Activated B cell treated with CpG ODN at 0.5 μM for 24 hours (primary cell): ENCODE measurements at regions of chr22 and their contacts with region 1.

Region 1: GRCh38 chr22:41285820-41286638 is at the start of gene RANGAP1:
- DNase-seq: peak; percentile 93
- ATAC-seq: peak; percentile 97
- H3K4me3 Mint-ChIP-seq: peak within 1 kb of the TSS; percentile 94
- H3K27ac Mint-ChIP-seq: peak within 1 kb of the TSS; percentile 98
- H3K4me1 Mint-ChIP-seq: peaks cover 28% of the 10 kb centered on the region
- H3K27me3 Mint-ChIP-seq: no peaks in the 10 kb centered on the region
- CTCF ChIP-seq: no peak
- total RNA-seq, gene RANGAP1: 48.9 and 56.4 TPM in 2 replicates

Region 2: DNA sequence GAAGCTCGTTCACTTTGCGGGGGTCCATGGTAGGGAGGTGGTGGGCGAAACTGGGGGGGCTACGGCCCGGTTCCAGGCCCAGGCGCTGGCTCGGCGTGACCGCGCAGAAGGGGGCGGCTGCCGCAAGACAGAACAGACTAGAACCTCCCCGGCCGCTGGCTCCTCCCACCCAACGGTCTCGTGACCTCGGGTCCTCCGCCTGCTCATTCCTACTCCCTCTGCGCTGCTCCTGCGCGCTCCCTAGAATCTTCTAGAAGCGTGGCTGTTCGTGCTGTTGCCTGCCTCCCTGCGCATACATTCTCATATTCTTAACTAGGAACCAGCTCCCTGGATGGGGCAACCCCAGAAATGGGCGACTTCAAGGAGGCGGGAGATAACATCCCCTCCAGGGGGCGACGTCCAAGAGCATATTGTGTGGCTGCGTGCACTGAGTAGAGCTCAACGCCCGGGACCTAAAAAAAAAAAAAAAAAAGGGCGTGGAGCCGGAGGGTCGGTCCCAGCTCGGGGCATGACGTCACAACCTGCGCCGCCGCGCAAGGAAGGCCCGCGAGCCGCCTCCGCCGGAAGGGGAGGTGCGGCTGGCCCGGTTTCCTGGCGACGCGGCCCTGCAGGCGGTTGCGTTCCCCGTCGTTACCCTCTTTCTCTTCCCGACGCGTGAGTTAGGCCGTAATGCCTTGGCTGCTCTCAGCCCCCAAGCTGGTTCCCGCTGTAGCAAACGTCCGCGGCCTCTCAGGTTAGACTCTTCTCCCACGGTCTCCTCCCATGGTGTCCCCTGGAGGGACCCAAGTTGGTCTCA is 429.3 kb before region 1 on chr22 and contains the starts of genes ST13 and XPNPEP3:
- CTCF ChIA-PET with region 1: no interaction called
- POLR2A ChIA-PET with region 1: no interaction called
- intact Hi-C with region 1: loop called (anchors 1 kb)
- DNase-seq: peak; percentile 96
- ATAC-seq: peak; percentile 90
- H3K4me3 Mint-ChIP-seq: peak within 1 kb of the TSS; percentile 98
- H3K27ac Mint-ChIP-seq: peak within 1 kb of the TSS; percentile 100
- H3K4me1 Mint-ChIP-seq: peaks cover 47% of the 10 kb centered on the region
- H3K27me3 Mint-ChIP-seq: no peaks in the 10 kb centered on the region
- CTCF ChIP-seq: no peak
- total RNA-seq, gene ST13: 183 and 221 TPM in 2 replicates
- total RNA-seq, gene XPNPEP3: 20.3 and 20.8 TPM in 2 replicates

Region 3: DNA sequence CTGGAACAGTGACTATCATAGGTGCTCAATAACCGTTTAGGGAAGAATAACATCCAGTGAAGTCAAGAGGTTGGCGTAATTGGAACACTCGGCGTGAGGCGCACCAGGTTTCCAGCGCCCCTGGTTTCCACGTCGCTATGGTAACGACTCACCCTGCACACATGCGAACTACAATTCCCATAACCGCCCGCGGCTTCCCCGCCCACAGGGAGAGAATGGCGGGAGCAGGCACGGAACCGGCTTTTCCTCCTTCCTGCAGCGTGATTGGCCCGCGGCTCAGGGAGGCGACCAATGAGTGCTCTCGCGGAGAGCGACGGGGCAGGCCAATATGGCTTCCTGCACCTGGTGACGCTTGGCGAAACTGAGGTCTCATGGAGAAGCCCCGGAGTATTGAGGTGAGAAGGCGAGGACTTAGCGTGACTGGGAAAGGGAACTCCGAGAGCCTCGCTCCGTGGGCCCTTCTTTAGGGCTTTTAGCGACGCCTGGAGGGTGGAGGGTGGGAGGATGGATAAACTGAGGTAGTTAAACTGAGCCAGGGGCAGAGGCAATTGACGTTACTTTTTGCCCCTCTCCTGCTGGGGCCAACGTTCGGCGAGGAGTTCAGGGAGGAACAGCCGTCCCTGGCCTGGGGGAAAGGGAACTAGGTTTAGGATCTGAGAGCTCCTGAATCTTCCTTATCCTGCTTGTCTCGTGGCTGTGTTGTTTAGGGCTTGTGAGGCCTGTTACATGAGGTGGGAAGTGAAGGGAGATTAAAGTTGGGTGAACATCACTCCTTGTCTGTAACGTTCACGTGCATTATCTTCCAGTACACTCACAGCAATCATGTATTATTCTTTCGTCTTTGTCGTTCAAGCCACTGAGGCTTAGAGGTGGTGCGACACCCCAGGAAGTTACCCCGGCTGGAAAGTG is 80.8 kb before region 1 on chr22 and contains the start of gene L3MBTL2:
- CTCF ChIA-PET with region 1: no interaction called
- POLR2A ChIA-PET with region 1: interaction called, 3 read pairs
- intact Hi-C with region 1: loop called (anchors 1 kb)
- DNase-seq: peak; percentile 96
- ATAC-seq: peak; percentile 100
- H3K4me3 Mint-ChIP-seq: peak within 1 kb of the TSS; percentile 90
- H3K27ac Mint-ChIP-seq: peak within 1 kb of the TSS; percentile 86
- H3K4me1 Mint-ChIP-seq: peaks cover 30% of the 10 kb centered on the region
- H3K27me3 Mint-ChIP-seq: peaks cover 9% of the 10 kb centered on the region
- CTCF ChIP-seq: no peak
- total RNA-seq, gene L3MBTL2: 39.9 and 42.3 TPM in 2 replicates

Region 4: DNA sequence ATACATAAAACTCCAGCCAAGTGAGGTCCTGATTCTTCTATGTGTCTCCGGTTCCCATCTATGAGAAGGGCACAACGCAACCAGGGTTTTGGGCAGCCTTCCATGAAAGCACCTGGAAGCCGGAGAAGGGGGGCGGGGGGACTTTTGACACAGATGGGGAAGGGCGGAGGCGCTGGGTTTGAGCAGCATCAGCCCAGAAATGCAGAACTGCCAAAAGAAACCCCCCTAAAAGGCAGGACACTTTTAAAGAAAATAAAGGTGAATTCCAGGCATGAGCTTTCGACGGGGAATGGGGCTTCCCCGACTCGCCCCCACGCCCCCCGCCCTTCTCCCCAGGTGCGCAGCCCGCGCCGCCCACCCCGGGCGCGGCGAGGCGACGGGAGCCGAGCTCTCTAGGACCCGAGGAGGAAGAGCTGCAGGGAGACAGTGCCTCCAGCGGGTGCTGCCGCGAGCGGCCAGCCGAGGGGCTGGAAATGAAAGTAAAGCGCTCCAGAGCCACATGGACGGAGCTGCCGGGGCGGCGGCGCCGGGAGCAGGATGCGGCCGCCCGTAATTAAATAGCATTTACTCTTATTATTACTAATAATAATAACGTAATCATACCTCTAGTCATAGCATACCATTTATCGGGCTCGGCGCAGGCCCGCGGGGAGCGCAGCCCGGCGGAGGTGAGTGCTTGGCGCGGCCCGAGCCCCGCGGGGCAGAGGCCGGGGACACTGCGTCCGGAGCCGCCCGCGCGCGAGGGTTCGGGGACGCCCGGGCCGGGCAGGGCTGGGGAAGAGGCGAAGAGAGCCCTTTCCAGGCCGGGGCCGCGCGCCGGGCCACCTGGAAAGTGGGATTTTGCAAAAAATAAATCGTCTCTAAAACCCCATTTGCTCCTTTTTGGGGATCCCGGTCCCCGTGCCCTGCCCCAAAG is 15.3 kb after region 1 on chr22 and contains the start of gene ZC3H7B:
- CTCF ChIA-PET with region 1: interaction called, 14 read pairs
- POLR2A ChIA-PET with region 1: interaction called, 101 read pairs
- intact Hi-C with region 1: loop called (anchors 1 kb)
- DNase-seq: peak; percentile 74
- ATAC-seq: peak; percentile 93
- H3K4me3 Mint-ChIP-seq: peak within 1 kb of the TSS; percentile 83
- H3K27ac Mint-ChIP-seq: peak within 1 kb of the TSS; percentile 92
- H3K4me1 Mint-ChIP-seq: peaks cover 30% of the 10 kb centered on the region
- H3K27me3 Mint-ChIP-seq: no peaks in the 10 kb centered on the region
- CTCF ChIP-seq: no peak
- total RNA-seq, gene ZC3H7B: 54.0 and 58.2 TPM in 2 replicates

Region 5: DNA sequence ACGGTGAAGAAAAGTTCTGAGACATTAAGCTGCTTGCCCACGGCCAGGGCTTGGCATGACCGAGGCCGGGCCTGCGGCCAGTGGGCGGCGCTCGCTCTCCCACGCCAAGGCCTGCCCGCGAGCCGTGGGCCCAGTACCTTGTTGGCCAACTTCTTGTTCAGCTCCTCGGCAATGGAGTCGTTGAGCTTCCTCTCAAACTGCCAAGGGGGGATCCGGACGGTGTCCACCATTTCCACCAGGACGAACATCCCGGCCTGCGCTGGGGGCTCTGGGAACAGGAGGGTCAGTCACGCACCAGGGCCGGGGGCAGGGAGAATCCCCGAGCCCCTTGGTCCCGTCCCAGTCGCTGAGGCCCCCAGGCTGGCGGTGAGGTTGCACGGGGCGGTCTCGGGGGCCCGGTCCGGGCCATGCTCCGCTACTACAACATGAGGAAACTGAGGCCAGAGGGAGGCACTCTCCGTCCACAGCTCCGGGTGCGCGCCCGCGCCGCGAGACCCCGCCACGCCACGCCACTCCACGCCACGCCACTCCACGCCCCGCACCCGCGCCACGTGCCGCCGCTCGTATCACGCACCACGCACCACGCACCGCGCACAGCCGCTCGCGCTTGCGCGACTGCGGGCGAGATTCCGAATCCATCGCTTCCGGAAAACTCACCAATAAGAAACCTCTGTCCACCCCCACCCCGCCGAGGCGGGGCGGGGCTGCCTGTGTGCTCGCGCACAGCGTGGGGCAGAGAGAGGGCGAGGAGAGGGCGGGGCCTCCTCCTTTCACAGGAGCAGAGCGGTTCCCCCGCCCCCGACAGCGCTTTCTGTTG is 258.0 kb after region 1 on chr22 and contains the start of gene POLR3H:
- CTCF ChIA-PET with region 1: no interaction called
- POLR2A ChIA-PET with region 1: interaction called, 5 read pairs
- intact Hi-C with region 1: loop called (anchors 2 kb)
- DNase-seq: peak; percentile 93
- ATAC-seq: peak; percentile 99
- H3K4me3 Mint-ChIP-seq: peak within 1 kb of the TSS; percentile 96
- H3K27ac Mint-ChIP-seq: peak within 1 kb of the TSS; percentile 86
- H3K4me1 Mint-ChIP-seq: peaks cover 43% of the 10 kb centered on the region
- H3K27me3 Mint-ChIP-seq: no peaks in the 10 kb centered on the region
- CTCF ChIP-seq: no peak
- total RNA-seq, gene POLR3H: 39.0 and 43.9 TPM in 2 replicates